ENCODE measurements at regions of chr2 and their contacts with region 1.

Region 1: GRCh38 chr2:60881047-60881932 is at the start of gene REL:
- DNase-seq: peak; percentile 91
- ATAC-seq: peak; percentile 89
- H3K4me3 Mint-ChIP-seq: peak within 1 kb of the TSS; percentile 95
- H3K27ac Mint-ChIP-seq: peak within 1 kb of the TSS; percentile 98
- H3K4me1 Mint-ChIP-seq: peaks cover 18% of the 10 kb centered on the region
- H3K27me3 Mint-ChIP-seq: no peaks in the 10 kb centered on the region
- total RNA-seq, gene REL: 20.1 to 21.6 TPM

Region 2: DNA sequence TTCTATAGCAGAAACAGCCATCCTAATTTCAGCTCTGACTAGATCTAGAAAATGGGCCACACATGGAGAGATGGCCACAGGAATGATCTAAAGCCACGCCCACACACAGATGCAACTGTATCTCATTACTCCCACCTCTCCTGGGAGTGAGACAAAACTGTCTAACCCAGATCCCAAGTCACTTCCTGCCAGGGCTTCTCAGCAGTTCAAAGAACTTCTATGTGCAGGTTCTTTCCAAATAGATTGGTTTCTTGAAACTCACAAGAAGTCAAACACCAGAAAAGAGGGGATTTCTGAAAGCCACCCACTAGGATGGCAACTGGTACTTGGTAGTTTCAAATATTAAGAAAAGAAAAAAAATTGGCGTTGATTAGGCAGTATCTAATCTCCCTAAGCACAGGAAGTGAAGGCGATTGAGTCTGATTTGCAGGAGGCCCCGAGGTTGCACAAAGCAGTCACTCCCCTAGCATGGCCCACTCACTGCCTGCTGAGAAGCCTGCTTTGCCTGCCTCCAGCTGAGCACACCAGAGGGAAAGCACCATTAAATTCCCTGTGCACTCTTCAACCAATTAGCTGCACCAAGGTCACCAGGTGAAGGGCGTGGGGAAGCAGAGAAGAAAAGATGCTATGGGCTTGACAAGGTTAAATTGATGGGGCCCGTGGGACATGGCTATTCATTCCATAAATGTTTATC is 74.2 kb before region 1 on chr2:
- CTCF ChIA-PET with region 1: interaction called, 13 read pairs
- POLR2A ChIA-PET with region 1: interaction called, 8 read pairs
- DNase-seq: peak; percentile 41
- ATAC-seq: peak; percentile 71
- H3K4me3 Mint-ChIP-seq: peak overlapping the region; percentile 17
- H3K27ac Mint-ChIP-seq: peak overlapping the region; percentile 89
- H3K4me1 Mint-ChIP-seq: peaks cover 28% of the 10 kb centered on the region
- H3K27me3 Mint-ChIP-seq: no peaks in the 10 kb centered on the region

Region 3: DNA sequence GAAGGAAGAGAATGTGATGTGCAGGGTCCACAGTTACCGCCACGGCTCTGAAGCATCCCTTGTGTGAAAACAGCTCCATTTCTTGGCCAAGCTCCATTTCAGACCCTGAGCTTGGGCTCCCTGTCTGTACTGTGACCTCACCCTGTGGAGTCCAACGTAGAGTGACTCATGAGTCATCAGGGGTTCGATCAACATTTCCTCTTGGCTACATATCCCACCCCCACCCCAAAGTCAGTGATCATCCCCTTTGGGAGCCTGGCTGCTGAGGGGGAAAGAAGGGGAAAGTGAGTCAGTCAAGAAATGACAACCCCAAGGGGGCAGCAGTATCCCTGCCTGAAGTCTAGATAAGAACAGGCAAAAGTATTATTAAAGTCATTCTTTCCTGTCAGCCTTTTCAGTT is 63.0 kb before region 1 on chr2:
- CTCF ChIA-PET with region 1: interaction called, 48 read pairs
- POLR2A ChIA-PET with region 1: interaction called, 62 read pairs
- DNase-seq: peak; percentile 44
- ATAC-seq: no peak
- H3K4me3 Mint-ChIP-seq: no peak overlapping the region
- H3K27ac Mint-ChIP-seq: peak overlapping the region; percentile 72
- H3K4me1 Mint-ChIP-seq: peaks cover 45% of the 10 kb centered on the region
- H3K27me3 Mint-ChIP-seq: peaks cover 7% of the 10 kb centered on the region

Region 4: GRCh38 chr2:60867848-60868247 is 13.4 kb before region 1 on chr2:
- CTCF ChIA-PET with region 1: interaction called, 10 read pairs
- POLR2A ChIA-PET with region 1: interaction called, 17 read pairs
- DNase-seq: peak; percentile 68
- ATAC-seq: peak; percentile 93
- H3K4me3 Mint-ChIP-seq: peak overlapping the region; percentile 42
- H3K27ac Mint-ChIP-seq: peak overlapping the region; percentile 87
- H3K4me1 Mint-ChIP-seq: peaks cover 25% of the 10 kb centered on the region
- H3K27me3 Mint-ChIP-seq: no peaks in the 10 kb centered on the region

Region 5: GRCh38 chr2:61193670-61194571 is 312.6 kb after region 1 on chr2:
- CTCF ChIA-PET with region 1: no interaction called
- POLR2A ChIA-PET with region 1: no interaction called
- DNase-seq: no peak
- ATAC-seq: peak; percentile 76
- H3K4me3 Mint-ChIP-seq: no peak overlapping the region
- H3K27ac Mint-ChIP-seq: peak overlapping the region; percentile 3
- H3K4me1 Mint-ChIP-seq: peaks cover 10% of the 10 kb centered on the region
- H3K27me3 Mint-ChIP-seq: no peaks in the 10 kb centered on the region

Measured in activated CD8-positive, alpha-beta T cell treated with anti-CD3 and anti-CD28 coated beads, Interleukin-2, amount 10 ng/mL, durations not matched to agents 7 days and 5 days (primary cell).